ENCODE measurements at regions of chr1 and their contacts with region 1.

Region 1: DNA sequence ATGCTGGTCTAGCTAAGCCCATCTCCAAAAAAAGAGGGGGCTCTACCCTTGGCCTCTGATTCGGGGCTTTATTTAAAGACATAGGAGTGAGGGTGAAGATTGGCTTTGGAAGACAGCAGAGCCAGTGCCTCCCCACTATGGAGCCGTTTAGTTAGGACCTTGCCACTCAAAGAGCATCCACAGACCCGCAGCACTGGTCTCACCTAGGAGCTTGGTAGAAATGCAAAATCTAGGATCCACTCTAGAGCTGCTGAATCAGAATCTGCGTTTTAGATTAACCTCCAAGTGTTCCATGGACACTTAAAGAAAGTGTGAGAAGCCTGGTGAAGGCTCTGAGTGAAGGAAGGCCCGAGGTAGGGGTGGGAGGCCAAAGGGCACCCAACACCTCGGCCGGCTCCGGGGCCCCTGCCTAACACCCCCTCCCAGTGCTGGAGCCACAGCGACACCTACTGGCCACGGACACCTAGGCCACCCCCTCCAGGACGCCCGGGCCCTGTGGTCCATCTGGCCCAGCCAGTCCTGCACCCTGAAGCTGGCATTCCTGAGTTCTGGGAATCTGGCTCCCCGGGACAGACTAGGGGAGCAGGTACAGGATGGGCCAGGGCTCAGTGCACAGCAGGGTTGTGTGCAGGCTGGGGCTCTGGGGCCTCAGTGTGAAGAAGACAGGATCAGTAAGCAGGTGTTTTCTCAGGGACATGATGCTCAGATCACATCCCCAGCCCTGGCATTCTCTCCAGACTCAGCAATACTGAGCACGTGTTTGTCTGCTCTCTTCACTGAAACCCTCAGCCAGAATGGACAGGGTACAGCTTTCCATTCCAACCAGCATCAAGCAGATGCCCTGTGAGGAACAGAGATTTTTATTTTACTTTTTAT is 79.2 kb downstream of the TMEM53 start:
- DNase-seq: peak; percentile 15 to 85 (median 65)
- ATAC-seq: peak; percentile 79 to 90 (median 84)
- H3K4me3 ChIP-seq: no peak overlapping the region
- H3K4me3 Mint-ChIP-seq: no peak overlapping the region
- H3K27ac ChIP-seq: no peak overlapping the region
- H3K27ac Mint-ChIP-seq: no peak overlapping the region
- H3K4me1 ChIP-seq: peaks cover 0 to 4% of the 10 kb centered on the region in 2 experiments
- H3K4me1 Mint-ChIP-seq: no peaks in the 10 kb centered on the region
- H3K27me3 ChIP-seq: peaks cover 0 to 20% of the 10 kb centered on the region in 2 experiments
- H3K27me3 Mint-ChIP-seq: peaks cover 0 to 12% of the 10 kb centered on the region in 2 donors

Region 2: DNA sequence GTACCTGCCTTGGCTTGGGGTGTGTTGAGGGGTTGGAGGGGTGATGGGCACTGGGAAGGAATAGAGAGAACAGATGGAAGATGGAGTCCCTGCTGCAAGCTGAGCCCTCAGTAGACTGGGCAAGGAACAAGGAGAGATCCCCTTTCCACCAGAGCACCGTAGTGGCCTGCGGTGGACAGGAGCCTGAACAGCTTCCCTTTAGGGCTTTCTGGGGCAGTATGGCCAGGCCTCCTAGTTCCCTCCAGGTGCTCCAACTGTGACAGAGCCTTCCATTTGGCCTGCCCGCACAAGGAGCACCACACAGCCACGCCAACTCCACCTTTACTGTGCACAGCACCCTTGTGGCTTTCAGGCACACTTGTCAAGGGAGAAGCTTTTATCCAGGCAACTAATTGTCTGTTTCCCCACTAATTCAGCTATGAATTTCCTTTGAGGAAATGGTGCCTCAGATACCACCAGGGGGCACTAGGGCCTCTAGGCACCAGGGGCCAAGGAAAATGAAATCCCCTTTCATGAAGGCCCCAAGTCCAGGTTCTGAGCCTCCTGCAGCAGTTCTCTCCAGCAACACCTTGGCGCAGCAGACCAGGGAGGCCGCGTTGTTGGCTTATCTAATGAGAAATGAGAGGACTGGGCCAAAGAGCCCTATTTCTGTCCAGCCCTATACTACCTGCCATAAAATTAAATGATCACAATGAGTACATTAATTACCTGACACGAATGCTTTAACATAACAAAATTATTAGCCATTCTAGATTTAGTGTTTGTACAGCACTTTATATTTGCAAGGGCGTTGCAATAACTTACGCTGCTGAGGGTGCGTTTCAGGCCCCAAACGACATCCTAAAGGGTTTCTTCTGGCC is 217.0 kb before region 1 on chr1:
- CTCF ChIA-PET with region 1: interaction called, 5 to 10 read pairs
- POLR2A ChIA-PET with region 1: no interaction called
- DNase-seq: peak in 30 of 35 experiments; percentile 4 to 69 (median 30)
- ATAC-seq: peak in 1 of 4 experiments; percentile 45
- H3K4me3 ChIP-seq: no peak overlapping the region
- H3K4me3 Mint-ChIP-seq: no peak overlapping the region
- H3K27ac ChIP-seq: no peak overlapping the region
- H3K27ac Mint-ChIP-seq: no peak overlapping the region
- H3K4me1 ChIP-seq: no peaks in the 10 kb centered on the region
- H3K4me1 Mint-ChIP-seq: no peaks in the 10 kb centered on the region
- H3K27me3 ChIP-seq: no peaks in the 10 kb centered on the region
- H3K27me3 Mint-ChIP-seq: no peaks in the 10 kb centered on the region

Measured in T-cell (primary cell).